Activated T-helper 1 cell treated with anti-CD3 and anti-CD28 coated beads, Interleukin-12 subunit alpha, Interleukin-12 subunit beta, Interleukin-2, Interleukin-4 antibody, amounts not matched to agents 30 ng/mL and 10 ng/mL and 1 ng/mL, durations not matched to agents 14 hours and 24 hours and 36 hours (primary cell): ENCODE measurements at regions of chr12 and their contacts with region 1.

Region 1: GRCh38 chr12:111444925-111445725 is 39.4 kb downstream of the SH2B3 start:
- DNase-seq: peak; percentile 87
- H3K4me3 Mint-ChIP-seq: peak overlapping the region; percentile 71
- H3K27ac Mint-ChIP-seq: peak overlapping the region; percentile 82
- H3K4me1 Mint-ChIP-seq: peaks cover 88% of the 10 kb centered on the region
- H3K27me3 Mint-ChIP-seq: no peaks in the 10 kb centered on the region

Region 2: GRCh38 chr12:111426344-111427185 is 18.6 kb before region 1 on chr12:
- intact Hi-C with region 1: loop called (anchors 1 kb)
- DNase-seq: no peak
- H3K4me3 Mint-ChIP-seq: peak overlapping the region; percentile 65
- H3K27ac Mint-ChIP-seq: peak overlapping the region; percentile 77
- H3K4me1 Mint-ChIP-seq: peaks cover 66% of the 10 kb centered on the region
- H3K27me3 Mint-ChIP-seq: no peaks in the 10 kb centered on the region

Region 3: DNA sequence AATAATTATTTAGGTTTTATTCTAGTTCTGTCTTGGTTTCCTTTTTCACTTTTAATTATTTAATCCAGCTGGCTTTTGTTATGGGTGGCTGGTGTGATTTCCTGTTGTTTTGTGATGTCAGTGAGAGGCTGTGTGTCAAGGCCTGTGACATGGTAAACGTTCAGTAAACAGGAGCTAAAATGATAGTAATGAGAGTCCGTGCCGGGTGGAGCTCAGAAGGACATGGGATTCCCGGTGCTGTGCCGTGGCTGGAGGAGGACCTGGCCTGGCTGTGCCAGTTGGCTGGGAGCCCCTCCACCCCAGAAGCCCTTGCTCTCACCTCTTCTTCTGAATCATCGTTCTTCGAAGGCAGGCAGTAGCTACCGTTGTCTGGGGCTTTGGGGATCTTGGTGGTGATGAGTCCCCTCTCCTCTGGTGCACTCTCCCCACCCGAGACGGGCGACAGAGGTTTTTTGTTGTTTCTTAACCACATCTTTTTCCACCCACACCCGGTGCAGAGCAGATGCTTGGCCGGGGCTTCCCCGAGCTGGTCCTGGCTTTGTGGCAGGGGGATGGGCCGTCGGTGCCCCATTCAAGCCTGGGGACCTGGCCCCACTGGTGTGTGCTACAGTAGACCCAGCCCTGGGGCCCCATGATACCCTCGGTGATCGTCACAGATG is 10.3 kb before region 1 on chr12:
- intact Hi-C with region 1: loop called (anchors 1 kb)
- DNase-seq: peak; percentile 83
- H3K4me3 Mint-ChIP-seq: peak overlapping the region; percentile 68
- H3K27ac Mint-ChIP-seq: peak overlapping the region; percentile 97
- H3K4me1 Mint-ChIP-seq: peaks cover 88% of the 10 kb centered on the region
- H3K27me3 Mint-ChIP-seq: no peaks in the 10 kb centered on the region